ENCODE measurements at regions of chr19 and their contacts with region 1.

Region 1: GRCh38 chr19:4682417-4683200 is 12.5 kb upstream of the MYDGF start:
- DNase-seq: no peak
- H3K4me3 ChIP-seq: no peak overlapping the region
- H3K27ac ChIP-seq: no peak overlapping the region
- H3K4me1 ChIP-seq: no peaks in the 10 kb centered on the region
- H3K27me3 ChIP-seq: no peaks in the 10 kb centered on the region
- CTCF ChIP-seq: no peak

Region 2: DNA sequence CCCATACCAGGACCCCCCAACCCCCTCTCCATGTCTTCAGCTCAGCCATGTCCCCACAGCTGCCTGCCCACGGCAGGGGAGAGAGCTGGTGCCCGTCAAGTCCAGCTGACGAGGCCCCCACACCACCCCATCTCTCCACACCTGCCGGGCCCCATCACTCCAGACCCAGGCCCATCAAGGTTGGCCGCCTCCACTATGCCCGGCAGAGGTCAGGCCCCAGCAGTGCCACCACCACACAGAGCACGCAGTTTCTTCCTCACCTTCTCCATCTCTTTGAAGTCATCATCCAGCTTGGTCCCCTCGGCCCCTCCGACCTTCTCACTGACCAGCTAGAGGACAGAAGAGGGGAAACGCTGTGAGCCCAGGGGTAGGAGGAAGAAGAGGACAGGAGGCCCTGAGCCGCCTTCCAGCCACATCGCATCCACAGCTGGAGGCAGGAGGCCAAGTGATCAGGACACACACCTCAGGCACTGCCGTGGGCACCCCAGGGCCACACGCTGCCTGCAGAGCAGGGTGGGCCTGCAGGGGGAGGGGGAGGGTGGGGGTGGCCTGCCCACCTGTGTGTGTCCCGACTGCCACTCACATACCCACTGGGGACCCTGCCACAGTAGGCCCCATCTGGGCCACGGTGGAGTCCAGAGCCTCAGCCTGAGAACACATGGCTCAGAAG is 315.8 kb before region 1 on chr19:
- CTCF ChIA-PET with region 1: no interaction called
- POLR2A ChIA-PET with region 1: interaction called, 20 read pairs
- intact Hi-C with region 1: no loop called
- DNase-seq: no peak
- H3K4me3 ChIP-seq: no peak overlapping the region
- H3K27ac ChIP-seq: no peak overlapping the region
- H3K4me1 ChIP-seq: peaks cover 10% of the 10 kb centered on the region
- H3K27me3 ChIP-seq: no peaks in the 10 kb centered on the region
- CTCF ChIP-seq: no peak

Region 3: DNA sequence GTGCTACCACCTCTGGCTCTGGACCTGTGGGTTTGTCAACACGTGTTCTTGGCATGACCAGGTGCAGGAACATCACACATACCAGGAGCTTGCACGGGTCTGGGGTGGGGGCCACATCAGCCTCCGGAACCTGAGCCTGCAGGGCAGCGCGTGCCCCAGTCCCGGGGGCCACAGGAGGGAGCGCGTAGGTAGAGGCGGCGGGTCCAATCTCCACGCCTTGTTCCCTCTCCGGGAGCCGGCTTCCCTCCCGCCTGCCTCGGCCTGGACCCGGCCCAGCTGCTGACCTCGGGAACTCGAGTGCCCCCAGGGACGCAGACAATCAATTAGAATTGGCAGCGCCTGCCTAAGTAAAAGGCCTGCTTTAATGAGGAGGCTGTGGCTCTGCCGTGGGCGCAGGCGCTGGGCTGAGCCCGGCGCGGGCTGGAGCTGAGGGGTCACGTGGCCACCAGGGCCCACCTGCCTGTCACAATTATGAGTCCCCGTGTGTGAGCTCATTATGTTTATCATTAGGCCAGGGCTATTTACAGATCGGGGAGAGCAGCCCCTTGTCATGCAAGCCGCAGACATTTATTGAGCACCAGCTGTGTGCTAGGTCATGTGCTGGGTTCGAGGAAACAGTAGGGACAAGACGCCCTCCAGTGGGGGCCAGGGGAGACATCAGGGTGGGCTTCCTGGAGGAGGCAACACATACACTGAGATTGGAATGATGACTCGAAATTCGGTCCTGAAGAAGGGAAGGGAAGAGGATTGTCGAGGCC is 75.5 kb before region 1 on chr19:
- CTCF ChIA-PET with region 1: no interaction called
- POLR2A ChIA-PET with region 1: no interaction called
- intact Hi-C with region 1: no loop called
- DNase-seq: peak; percentile 53
- H3K4me3 ChIP-seq: no peak overlapping the region
- H3K27ac ChIP-seq: no peak overlapping the region
- H3K4me1 ChIP-seq: peaks cover 7% of the 10 kb centered on the region
- H3K27me3 ChIP-seq: no peaks in the 10 kb centered on the region
- CTCF ChIP-seq: no peak